ENCODE measurements at regions of chr17 and their contacts with region 1.

Region 1: DNA sequence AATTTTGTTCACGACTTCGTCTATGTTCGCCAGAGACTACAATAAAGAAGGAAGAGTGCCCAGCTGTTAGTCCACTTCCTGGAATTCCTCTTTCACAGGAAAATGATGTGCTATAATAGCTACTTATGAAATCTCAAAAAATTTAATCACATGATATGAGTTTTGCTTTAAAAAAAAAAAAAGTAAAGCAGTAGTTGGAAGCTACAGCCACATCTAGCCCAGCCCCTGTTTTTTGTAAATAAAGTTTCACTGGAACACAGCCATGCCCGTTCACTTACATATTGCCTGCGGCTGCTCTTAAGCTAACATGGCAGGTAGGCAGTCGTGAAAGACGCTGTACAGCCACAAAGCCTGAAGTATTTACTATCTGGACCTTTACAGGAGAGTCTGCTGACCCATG is 15.3 kb downstream of the VPS53 start:
- DNase-seq: no peak
- H3K4me3 ChIP-seq: no peak overlapping the region
- H3K27ac ChIP-seq: no peak overlapping the region
- H3K4me1 ChIP-seq: peaks cover 0 to 4% (median 0%) of the 10 kb centered on the region in 4 donors
- H3K27me3 ChIP-seq: no peaks in the 10 kb centered on the region
- CTCF ChIP-seq: no peak

Region 2: GRCh38 chr17:412211-413015 is 286.9 kb before region 1 on chr17:
- intact Hi-C with region 1: loop called (anchors 2 kb)
- DNase-seq: peak in 1 of 2 donors; percentile 55
- H3K4me3 ChIP-seq: no peak overlapping the region
- H3K27ac ChIP-seq: no peak overlapping the region
- H3K4me1 ChIP-seq: peaks cover 0 to 25% (median 15%) of the 10 kb centered on the region in 4 donors
- H3K27me3 ChIP-seq: no peaks in the 10 kb centered on the region
- CTCF ChIP-seq: peak; percentile 71 to 74

Region 3: GRCh38 chr17:622356-622755 is 77.0 kb before region 1 on chr17:
- intact Hi-C with region 1: no loop called
- DNase-seq: no peak
- H3K4me3 ChIP-seq: no peak overlapping the region
- H3K27ac ChIP-seq: no peak overlapping the region
- H3K4me1 ChIP-seq: no peaks in the 10 kb centered on the region
- H3K27me3 ChIP-seq: no peaks in the 10 kb centered on the region
- CTCF ChIP-seq: no peak